Naive thymus-derived CD4-positive, alpha-beta T cell (primary cell): ENCODE measurements at regions of chr5 and their contacts with region 1.

Region 1: DNA sequence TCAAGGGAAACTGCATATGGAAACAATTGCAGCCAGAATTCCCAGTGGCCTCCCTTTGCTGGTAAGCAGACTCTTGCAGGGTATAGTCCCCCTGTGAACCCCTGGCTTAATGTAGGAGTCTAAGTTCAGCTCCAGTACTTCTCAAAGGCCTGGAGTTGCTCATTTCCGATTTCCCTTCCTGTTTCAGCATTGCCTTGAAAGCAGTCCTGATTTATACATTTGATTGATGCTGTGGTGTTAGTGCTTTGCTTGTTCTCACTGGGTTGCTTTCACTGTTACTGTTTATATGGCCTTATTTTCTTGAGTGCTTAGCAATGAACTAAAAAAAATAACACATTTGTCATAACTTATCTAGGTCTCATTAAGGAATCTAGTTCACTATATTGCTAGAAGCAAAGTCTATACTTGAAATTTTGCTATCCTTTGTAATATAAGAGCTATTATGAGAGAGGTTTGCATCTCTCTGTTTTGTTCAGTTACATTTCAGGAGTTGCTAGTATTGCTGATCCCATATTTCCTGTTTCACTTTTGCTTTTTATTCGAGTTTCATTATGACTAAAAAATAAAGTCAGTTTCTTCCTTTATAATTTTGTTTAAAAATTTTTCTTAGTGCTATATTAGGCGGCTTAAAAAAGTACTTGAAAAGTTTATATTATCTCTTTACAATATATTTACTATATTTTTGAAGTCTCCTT is 122.4 kb upstream of the NMUR2 start:
- DNase-seq: no peak
- ATAC-seq: no peak
- H3K4me3 ChIP-seq: no peak overlapping the region
- H3K4me3 Mint-ChIP-seq: peak overlapping the region in 8 of 10 donors; percentile 23 to 73 (median 48)
- H3K27ac ChIP-seq: no peak overlapping the region
- H3K27ac Mint-ChIP-seq: peak overlapping the region in 8 of 9 donors; percentile 1 to 82 (median 40)
- H3K4me1 ChIP-seq: peaks cover 7 to 12% of the 10 kb centered on the region in 2 donors
- H3K4me1 Mint-ChIP-seq: peaks cover 10 to 28% (median 21%) of the 10 kb centered on the region in 7 donors
- H3K27me3 ChIP-seq: no peaks in the 10 kb centered on the region
- H3K27me3 Mint-ChIP-seq: peaks cover 0 to 40% (median 0%) of the 10 kb centered on the region in 5 donors

Region 2: GRCh38 chr5:153358315-153358976 is 830.9 kb after region 1 on chr5:
- CTCF ChIA-PET with region 1: no interaction called
- POLR2A ChIA-PET with region 1: no interaction called
- intact Hi-C with region 1: loop called in 1 of 2 experiments (anchors 1 kb)
- DNase-seq: no peak
- ATAC-seq: peak; percentile 36
- H3K4me3 ChIP-seq: no peak overlapping the region
- H3K4me3 Mint-ChIP-seq: peak overlapping the region in 3 of 10 donors; percentile 3 to 56 (median 12)
- H3K27ac ChIP-seq: no peak overlapping the region
- H3K27ac Mint-ChIP-seq: peak overlapping the region in 1 of 9 donors; percentile 66
- H3K4me1 ChIP-seq: no peaks in the 10 kb centered on the region
- H3K4me1 Mint-ChIP-seq: peaks cover 4 to 18% (median 9%) of the 10 kb centered on the region in 7 donors
- H3K27me3 ChIP-seq: no peaks in the 10 kb centered on the region
- H3K27me3 Mint-ChIP-seq: peaks cover 0 to 3% (median 1%) of the 10 kb centered on the region in 5 donors